Panc1 (cell line): ENCODE measurements at regions of chr13 and their contacts with region 1.

Region 1: DNA sequence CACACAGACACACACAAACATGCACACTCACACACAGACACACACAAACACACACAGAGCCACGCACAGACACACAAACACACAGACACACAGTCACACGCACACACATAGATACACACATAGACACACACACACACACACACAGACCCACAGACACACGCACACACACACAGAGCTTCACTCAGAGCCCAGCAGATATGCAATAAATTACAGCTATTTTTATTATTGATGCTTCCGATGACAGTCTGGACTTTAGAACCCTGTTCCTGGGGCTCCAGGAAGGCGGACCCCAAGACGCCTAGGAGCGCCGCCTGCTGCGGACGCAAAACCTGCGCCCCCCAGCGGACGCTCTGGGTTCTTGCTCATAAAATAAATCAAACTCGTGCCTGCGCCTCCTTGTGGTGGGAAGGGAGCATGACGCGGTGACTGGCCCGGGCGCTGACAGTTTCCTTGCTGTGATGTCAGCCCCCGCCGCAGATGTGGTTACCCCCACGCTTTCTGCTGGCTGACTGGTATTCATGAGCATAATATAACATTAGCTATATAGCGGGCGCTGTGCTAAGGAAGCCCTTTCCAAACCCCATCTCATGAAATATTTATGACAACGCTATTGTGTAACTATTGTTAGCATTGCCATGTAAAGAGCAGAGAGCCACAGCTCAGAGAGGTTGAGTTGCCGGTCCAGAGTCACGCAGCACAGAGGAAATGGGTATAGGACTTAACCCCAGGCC is 64.4 kb upstream of the TM9SF2 start:
- DNase-seq: peak; percentile 48
- ATAC-seq: peak; percentile 54
- H3K4me3 ChIP-seq: no peak overlapping the region
- H3K27ac ChIP-seq: no peak overlapping the region
- H3K4me1 ChIP-seq: peaks cover 5% of the 10 kb centered on the region; the same call in 1 of the 2 replicates
- H3K27me3 ChIP-seq: no peaks in the 10 kb centered on the region
- CTCF ChIP-seq: peak; percentile 97

Region 2: DNA sequence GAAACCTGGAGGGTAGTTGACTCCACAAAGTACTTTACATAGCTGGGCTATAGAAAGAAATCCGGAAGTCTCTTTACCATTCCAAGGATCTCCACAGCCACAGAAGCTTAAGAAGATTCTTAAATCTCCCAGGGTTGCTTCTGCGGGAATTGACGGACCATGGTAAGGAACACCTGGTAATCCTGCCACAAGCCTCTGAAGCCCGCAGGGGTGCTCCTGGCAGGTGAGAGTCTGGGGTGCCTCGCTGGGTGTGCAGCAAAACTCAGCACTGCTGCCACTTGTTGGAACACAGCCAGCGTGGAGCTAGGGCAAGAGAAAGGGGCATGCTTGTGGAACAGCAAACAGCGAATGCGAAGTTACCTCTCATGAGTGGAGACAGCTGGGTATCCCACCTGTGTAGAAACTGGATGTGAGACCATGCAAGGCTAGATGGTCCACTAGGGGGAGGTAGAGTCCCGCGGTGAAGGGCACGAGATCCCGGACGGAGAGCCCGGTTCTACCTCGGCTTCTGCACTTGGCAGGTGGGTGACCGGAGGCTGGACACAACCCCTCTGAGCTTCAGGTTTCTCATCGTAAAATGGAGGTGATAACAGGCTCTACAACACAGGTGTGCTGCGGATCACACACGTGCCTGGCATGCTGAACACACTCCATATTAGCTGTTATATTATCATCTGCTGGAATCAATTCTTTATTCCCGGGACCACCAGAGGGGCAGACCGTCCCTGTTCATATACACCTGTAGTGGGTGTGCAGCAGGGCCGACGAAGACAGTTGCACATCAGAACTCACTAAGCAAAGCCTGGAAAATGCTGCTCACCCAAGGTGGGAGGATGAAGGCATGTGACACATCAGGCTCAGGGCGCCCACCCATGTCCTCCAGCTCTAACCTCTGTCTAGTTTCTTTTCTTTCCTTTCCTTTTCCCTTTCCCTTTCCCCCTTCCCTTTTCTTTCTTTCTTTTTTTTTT is 260.3 kb before region 1 on chr13:
- CTCF ChIA-PET with region 1: interaction called, 6 read pairs
- POLR2A ChIA-PET with region 1: no interaction called
- in situ Hi-C with region 1: no loop called
- intact Hi-C with region 1: loop called (anchors 2 kb)
- DNase-seq: peak; percentile 46
- ATAC-seq: peak; percentile 96
- H3K4me3 ChIP-seq: no peak overlapping the region
- H3K27ac ChIP-seq: no peak overlapping the region
- H3K4me1 ChIP-seq: no peaks in the 10 kb centered on the region
- H3K27me3 ChIP-seq: no peaks in the 10 kb centered on the region; the same call in 1 of the 2 replicates
- CTCF ChIP-seq: peak; percentile 80